Testis (tissue), 5 donors: ENCODE measurements at regions of chr15 and their contacts with region 1.

Region 1: DNA sequence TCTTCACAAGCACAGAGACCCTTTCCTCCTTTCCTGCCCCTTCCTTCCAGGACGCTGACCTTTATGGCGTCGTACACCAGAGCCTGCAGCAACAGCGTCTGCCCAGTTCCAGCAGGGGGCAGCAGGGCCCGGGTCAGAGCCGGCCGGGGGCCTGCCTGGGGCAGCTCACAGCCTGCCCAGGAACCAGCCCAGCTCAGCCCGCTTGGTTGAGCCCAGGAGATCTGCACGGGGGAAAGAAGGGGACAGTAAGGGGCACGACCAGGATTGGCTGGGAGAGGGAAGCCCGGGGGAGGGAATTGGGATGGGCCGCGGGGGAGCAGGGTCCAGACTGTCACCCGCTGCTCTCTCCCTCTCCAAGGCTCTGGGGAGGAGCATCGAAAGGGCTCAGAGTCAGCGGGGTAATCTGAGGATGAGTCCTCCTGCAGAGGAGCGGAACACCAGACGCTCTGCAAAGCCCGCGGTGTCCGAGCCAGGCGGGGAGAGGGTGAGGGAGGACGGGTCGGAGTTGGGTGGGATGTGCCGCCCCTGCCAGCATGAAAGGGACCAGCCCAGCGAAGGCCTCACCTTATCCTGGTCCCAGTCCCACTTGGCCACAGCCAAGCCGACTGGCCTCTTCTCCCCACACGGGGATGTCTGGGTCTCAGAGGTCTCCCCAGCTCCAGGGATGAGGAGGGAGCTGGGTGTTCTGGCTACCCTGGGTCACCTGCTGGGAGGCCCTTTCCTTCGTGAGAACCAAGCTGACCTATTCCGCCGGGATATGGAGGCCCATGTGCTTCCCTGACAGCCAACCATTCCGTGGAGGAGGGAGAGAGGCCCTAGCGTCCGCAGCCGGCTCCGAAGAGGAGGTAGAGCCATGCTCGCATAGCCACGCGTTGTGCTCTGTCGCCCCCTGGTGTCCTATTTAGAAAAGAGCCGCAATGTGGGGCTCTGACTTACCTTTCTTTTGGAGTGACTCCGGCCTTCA is 7.4 kb upstream of the IGDCC3 start:
- DNase-seq: peak; percentile 94
- H3K4me3 ChIP-seq: peak overlapping the region; percentile 22 to 43
- H3K27ac ChIP-seq: peak overlapping the region in 1 of 2 donors; percentile 17
- H3K4me1 ChIP-seq: peaks cover 21% of the 10 kb centered on the region
- H3K27me3 ChIP-seq: no peaks in the 10 kb centered on the region
- CTCF ChIP-seq: peak; percentile 89 to 90 (median 90)
- POLR2A ChIP-seq: no peak

Region 2: DNA sequence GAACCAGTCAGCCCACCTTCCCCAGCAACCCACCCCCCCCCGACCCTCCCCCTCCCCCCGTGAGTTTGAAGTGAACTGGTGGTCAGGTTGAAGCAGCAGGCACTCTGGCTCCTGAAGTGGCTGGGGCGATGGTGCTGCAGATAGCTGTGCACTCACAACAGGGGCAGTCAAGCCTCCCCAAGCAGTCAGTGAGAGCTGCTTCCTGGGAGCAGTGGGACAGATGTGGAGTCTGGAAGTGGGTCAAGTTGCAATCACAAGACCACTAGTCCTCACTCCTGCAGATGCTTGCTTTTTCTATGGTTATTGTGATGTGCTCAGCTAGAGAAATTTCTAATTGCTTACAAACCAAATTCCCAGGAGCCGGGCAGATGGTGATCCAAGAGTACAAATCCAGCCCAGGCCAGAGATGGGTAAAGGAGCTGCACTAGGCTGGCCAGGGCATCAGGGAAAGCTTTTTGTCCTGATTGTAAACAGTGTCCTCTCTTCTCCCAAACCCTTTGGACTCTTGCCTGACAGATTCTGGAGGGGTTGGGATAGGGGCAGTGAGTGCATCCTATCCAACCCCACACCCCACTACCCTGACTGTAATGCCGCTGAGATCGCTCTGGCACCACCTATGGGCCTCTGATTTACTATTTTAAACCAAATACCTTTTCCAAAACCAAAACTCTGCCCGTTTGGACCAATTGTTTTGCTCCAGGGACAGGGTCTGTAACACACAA is 190.2 kb before region 1 on chr15:
- intact Hi-C with region 1: no loop called
- DNase-seq: peak; percentile 63
- H3K4me3 ChIP-seq: no peak overlapping the region
- H3K27ac ChIP-seq: peak overlapping the region in 1 of 2 donors; percentile 78
- H3K4me1 ChIP-seq: no peaks in the 10 kb centered on the region
- H3K27me3 ChIP-seq: no peaks in the 10 kb centered on the region
- CTCF ChIP-seq: no peak
- POLR2A ChIP-seq: no peak

Region 3: GRCh38 chr15:65318870-65319356 is 66.3 kb before region 1 on chr15:
- intact Hi-C with region 1: loop called (anchors 2 kb)
- DNase-seq: peak; percentile 87
- H3K4me3 ChIP-seq: no peak overlapping the region
- H3K27ac ChIP-seq: no peak overlapping the region
- H3K4me1 ChIP-seq: peaks cover 3% of the 10 kb centered on the region
- H3K27me3 ChIP-seq: no peaks in the 10 kb centered on the region
- CTCF ChIP-seq: peak; percentile 86 to 89 (median 87)
- POLR2A ChIP-seq: no peak